A673 (cell line): ENCODE measurements at regions of chr2 and their contacts with region 1.

Region 1: DNA sequence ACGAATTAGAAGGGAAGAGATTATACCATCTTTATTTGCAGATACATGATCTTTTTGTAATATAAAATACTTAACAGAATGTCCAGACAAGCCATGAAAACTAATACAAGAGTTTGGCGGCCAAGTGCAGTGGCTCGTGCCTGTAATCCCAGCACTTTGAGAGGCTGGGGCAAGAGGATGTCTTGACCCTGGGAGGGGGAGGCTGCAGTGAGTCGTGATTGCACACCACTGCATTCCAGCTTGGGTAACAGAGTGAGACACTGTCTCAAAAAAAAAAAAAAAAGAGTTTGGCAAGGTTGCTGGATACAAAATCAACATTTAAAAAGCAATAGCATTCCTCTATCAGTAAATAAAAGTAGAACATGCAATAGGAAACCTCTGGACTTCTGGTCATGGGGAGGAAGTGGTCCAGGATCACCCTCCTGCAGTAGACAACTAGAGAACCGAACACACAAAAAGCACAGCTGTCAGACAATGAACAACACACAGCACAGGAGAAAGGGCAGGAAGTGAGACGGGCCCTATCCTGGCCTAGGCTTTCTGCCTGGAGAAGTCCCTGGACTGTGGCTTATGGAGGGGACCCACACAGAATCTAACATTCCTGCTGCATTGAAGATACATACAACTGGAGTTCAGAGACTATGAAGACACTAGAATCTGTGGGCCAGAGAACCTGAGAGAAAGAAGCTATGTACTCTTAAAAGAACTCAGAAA is 118.9 kb upstream of the ARL4C start:
- DNase-seq: no peak
- H3K4me3 ChIP-seq: no peak overlapping the region
- H3K27ac ChIP-seq: no peak overlapping the region
- H3K4me1 ChIP-seq: peaks cover 12% of the 10 kb centered on the region
- H3K27me3 ChIP-seq: no peaks in the 10 kb centered on the region
- CTCF ChIP-seq: no peak

Region 2: DNA sequence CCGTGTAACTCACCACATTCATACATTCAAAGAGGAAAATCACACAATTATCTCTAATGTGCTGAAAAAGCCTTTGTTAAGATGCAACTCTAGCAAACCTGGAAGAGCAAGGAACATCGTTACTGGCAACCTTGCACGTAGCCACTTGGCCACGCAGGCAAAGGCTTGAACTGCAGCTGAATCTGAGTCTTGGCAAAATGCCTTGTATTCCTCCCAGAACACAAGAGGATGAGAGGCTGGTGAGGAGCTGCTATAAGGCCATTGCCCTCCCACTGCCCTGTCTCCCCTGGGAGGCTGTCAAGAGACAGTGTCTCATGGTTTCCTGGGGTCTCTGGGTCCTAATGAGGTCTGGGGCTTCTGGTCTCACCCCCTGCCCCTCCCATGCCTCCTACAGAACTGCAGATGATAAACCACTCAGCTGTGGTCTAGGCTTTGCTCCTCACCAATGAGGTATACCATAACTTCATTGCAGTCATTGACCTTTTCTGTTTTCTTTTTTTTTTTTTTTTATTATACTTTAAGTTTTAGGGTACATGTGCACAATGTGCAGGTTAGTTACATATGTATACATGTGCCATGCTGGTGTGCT is 423.9 kb before region 1 on chr2:
- CTCF ChIA-PET with region 1: no interaction called
- POLR2A ChIA-PET with region 1: no interaction called
- intact Hi-C with region 1: no loop called
- DNase-seq: no peak
- H3K4me3 ChIP-seq: no peak overlapping the region
- H3K27ac ChIP-seq: no peak overlapping the region
- H3K4me1 ChIP-seq: no peaks in the 10 kb centered on the region
- H3K27me3 ChIP-seq: peaks cover 9% of the 10 kb centered on the region
- CTCF ChIP-seq: no peak

Region 3: DNA sequence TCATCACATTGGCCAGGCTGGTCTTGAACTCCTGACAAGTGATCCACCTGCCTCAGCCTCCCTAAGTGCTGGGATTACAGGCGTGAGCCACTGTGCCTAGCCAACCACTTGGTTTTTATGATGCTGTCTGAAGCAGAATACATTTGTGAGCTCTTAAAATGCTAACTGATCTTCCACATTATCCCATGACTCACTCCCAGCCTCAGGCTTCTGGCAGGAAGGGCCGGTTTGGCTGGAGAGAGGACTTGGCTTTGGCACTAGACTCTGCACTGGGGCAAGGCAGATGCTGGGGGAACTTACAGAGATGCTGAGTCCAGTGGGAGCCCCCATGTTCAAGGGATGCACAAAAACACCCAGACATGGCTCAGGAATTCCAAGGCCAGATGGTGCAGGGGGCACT is 295.5 kb after region 1 on chr2:
- CTCF ChIA-PET with region 1: no interaction called
- POLR2A ChIA-PET with region 1: no interaction called
- intact Hi-C with region 1: no loop called
- DNase-seq: no peak
- H3K4me3 ChIP-seq: no peak overlapping the region
- H3K27ac ChIP-seq: no peak overlapping the region
- H3K4me1 ChIP-seq: no peaks in the 10 kb centered on the region
- H3K27me3 ChIP-seq: no peaks in the 10 kb centered on the region
- CTCF ChIP-seq: no peak

Region 4: GRCh38 chr2:235034265-235035118 is 418.7 kb after region 1 on chr2:
- CTCF ChIA-PET with region 1: no interaction called
- POLR2A ChIA-PET with region 1: no interaction called
- intact Hi-C with region 1: loop called (anchors 5 kb)
- DNase-seq: no peak
- H3K4me3 ChIP-seq: no peak overlapping the region
- H3K27ac ChIP-seq: no peak overlapping the region
- H3K4me1 ChIP-seq: no peaks in the 10 kb centered on the region
- H3K27me3 ChIP-seq: no peaks in the 10 kb centered on the region
- CTCF ChIP-seq: no peak